Lower lobe of right lung (tissue), 2 donors: ENCODE measurements at regions of chr12 and their contacts with region 1.

Region 1: GRCh38 chr12:4037747-4038312 is 164.6 kb upstream of the PARP11 start:
- DNase-seq: no peak
- ATAC-seq: peak; percentile 38 to 66
- H3K4me3 ChIP-seq: no peak overlapping the region
- H3K27ac ChIP-seq: no peak overlapping the region
- H3K4me1 ChIP-seq: peaks cover 11% of the 10 kb centered on the region
- H3K27me3 ChIP-seq: no peaks in the 10 kb centered on the region
- CTCF ChIP-seq: peak; percentile 74

Region 2: GRCh38 chr12:3885277-3886094 is 152.3 kb before region 1 on chr12:
- intact Hi-C with region 1: no loop called
- DNase-seq: no peak
- ATAC-seq: peak; percentile 41 to 51
- H3K4me3 ChIP-seq: peak overlapping the region; percentile 39
- H3K27ac ChIP-seq: peak overlapping the region; percentile 44
- H3K4me1 ChIP-seq: no peaks in the 10 kb centered on the region
- H3K27me3 ChIP-seq: no peaks in the 10 kb centered on the region
- CTCF ChIP-seq: peak; percentile 81

Region 3: DNA sequence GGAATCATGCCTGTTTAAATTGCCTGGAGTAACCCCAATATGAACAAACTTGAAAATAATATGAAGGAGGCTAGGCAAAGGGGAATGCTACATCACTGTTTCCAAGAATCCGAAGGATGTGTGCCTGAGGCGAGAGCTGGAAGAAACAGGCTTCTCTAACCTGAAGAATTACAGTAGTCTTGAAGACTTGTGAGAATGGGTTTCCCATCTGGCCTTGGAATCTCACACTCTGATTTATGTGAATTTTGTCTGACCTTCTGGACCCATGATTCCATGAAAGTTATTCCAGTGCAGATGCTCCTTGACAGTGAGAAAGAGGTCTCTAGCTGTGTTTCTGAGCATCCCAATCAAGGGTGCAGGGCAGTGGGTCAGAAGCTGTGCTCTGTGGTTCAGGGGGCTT is 42.5 kb before region 1 on chr12:
- intact Hi-C with region 1: loop called (anchors 2 kb)
- DNase-seq: no peak
- ATAC-seq: no peak
- H3K4me3 ChIP-seq: no peak overlapping the region
- H3K27ac ChIP-seq: no peak overlapping the region
- H3K4me1 ChIP-seq: no peaks in the 10 kb centered on the region
- H3K27me3 ChIP-seq: peaks cover 5% of the 10 kb centered on the region
- CTCF ChIP-seq: no peak

Region 4: DNA sequence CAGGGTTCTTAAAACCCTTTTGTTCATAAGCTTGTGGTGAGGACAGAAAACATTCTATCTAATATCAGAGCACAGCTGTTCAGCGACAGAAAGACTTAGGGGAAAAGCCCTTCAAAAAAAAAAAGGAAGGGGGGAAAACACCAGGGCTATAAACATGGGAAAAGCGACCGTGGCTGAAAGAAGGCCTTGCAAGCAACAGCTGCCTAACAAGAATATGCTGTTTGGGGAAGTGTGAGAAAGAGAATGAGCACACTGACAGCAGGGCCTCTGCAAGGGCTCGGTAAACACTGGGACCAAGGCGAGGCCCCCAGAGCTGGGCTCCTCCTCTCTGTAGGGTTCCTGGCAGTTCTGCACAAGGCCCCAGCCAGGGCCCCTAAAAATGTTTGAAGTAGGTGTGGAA is 208.3 kb after region 1 on chr12:
- intact Hi-C with region 1: no loop called
- DNase-seq: no peak
- ATAC-seq: no peak
- H3K4me3 ChIP-seq: no peak overlapping the region
- H3K27ac ChIP-seq: no peak overlapping the region
- H3K4me1 ChIP-seq: no peaks in the 10 kb centered on the region
- H3K27me3 ChIP-seq: peaks cover 6% of the 10 kb centered on the region
- CTCF ChIP-seq: no peak